ENCODE measurements at regions of chr4 and their contacts with region 1.

Region 1: GRCh38 chr4:143358923-143359643 is 22.4 kb downstream of the GAB1 start:
- DNase-seq: peak; percentile 81 to 86
- H3K4me3 ChIP-seq: no peak overlapping the region
- H3K4me3 Mint-ChIP-seq: peak overlapping the region; percentile 70
- H3K27ac Mint-ChIP-seq: peak overlapping the region; percentile 84
- H3K4me1 ChIP-seq: peaks cover 65% of the 10 kb centered on the region
- H3K4me1 Mint-ChIP-seq: peaks cover 46% of the 10 kb centered on the region
- H3K27me3 ChIP-seq: no peaks in the 10 kb centered on the region
- H3K27me3 Mint-ChIP-seq: no peaks in the 10 kb centered on the region
- CTCF ChIP-seq: no peak

Region 2: GRCh38 chr4:143346206-143346605 is 12.9 kb before region 1 on chr4:
- CTCF ChIA-PET with region 1: interaction called, 3 read pairs
- POLR2A ChIA-PET with region 1: interaction called, 4 read pairs
- intact Hi-C with region 1: loop called (anchors 1 kb)
- DNase-seq: peak; percentile 49 to 57
- H3K4me3 ChIP-seq: no peak overlapping the region
- H3K4me3 Mint-ChIP-seq: no peak overlapping the region
- H3K27ac Mint-ChIP-seq: peak overlapping the region; percentile 91
- H3K4me1 ChIP-seq: peaks cover under 1% of the 10 kb centered on the region; the same call in 1 of the 2 replicates
- H3K4me1 Mint-ChIP-seq: peaks cover 28% of the 10 kb centered on the region
- H3K27me3 ChIP-seq: no peaks in the 10 kb centered on the region
- H3K27me3 Mint-ChIP-seq: no peaks in the 10 kb centered on the region
- CTCF ChIP-seq: no peak

Region 3: DNA sequence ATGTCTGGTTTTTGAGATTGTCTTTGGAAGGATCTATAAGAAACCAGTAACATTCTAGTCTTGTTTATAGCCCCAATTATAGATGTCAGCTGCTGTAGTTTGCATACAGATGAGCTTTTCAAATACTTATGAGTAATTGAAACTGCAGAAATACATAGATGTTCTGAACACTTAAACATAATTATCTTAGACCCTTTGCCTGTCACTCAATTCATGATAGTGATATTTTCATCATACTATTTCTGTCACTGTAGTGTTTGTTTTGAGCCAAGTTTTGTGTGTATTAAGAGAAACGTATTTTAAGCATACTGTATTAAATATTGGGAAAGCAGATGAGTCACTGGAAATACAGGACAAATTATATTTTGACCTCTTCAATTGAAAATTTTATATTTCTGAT is 84.6 kb after region 1 on chr4:
- CTCF ChIA-PET with region 1: no interaction called
- POLR2A ChIA-PET with region 1: no interaction called
- intact Hi-C with region 1: no loop called
- DNase-seq: no peak
- H3K4me3 ChIP-seq: no peak overlapping the region
- H3K4me3 Mint-ChIP-seq: no peak overlapping the region
- H3K27ac Mint-ChIP-seq: no peak overlapping the region
- H3K4me1 ChIP-seq: no peaks in the 10 kb centered on the region
- H3K4me1 Mint-ChIP-seq: no peaks in the 10 kb centered on the region
- H3K27me3 ChIP-seq: no peaks in the 10 kb centered on the region
- H3K27me3 Mint-ChIP-seq: no peaks in the 10 kb centered on the region
- CTCF ChIP-seq: no peak